ENCODE measurements at regions of chr12 and their contacts with region 1.

Region 1: GRCh38 chr12:53974084-53975063 is at the start of gene HOTAIR:
- DNase-seq: peak; percentile 72
- H3K4me3 Mint-ChIP-seq: peak within 1 kb of the TSS; percentile 36
- H3K27ac Mint-ChIP-seq: peak within 1 kb of the TSS; percentile 80
- H3K4me1 Mint-ChIP-seq: peaks cover 9% of the 10 kb centered on the region
- H3K27me3 Mint-ChIP-seq: peaks cover 89% of the 10 kb centered on the region
- total RNA-seq, gene HOTAIR: not detected in 2 replicates

Region 2: GRCh38 chr12:53828598-53828997 is 145.8 kb before region 1 on chr12:
- intact Hi-C with region 1: no loop called
- DNase-seq: no peak
- H3K4me3 Mint-ChIP-seq: no peak overlapping the region
- H3K27ac Mint-ChIP-seq: no peak overlapping the region
- H3K4me1 Mint-ChIP-seq: no peaks in the 10 kb centered on the region
- H3K27me3 Mint-ChIP-seq: peaks cover 27% of the 10 kb centered on the region

Region 3: GRCh38 chr12:53928054-53928835 is 46.1 kb before region 1 on chr12:
- intact Hi-C with region 1: no loop called
- DNase-seq: no peak
- H3K4me3 Mint-ChIP-seq: no peak overlapping the region
- H3K27ac Mint-ChIP-seq: no peak overlapping the region
- H3K4me1 Mint-ChIP-seq: no peaks in the 10 kb centered on the region
- H3K27me3 Mint-ChIP-seq: peaks cover 90% of the 10 kb centered on the region

Region 4: DNA sequence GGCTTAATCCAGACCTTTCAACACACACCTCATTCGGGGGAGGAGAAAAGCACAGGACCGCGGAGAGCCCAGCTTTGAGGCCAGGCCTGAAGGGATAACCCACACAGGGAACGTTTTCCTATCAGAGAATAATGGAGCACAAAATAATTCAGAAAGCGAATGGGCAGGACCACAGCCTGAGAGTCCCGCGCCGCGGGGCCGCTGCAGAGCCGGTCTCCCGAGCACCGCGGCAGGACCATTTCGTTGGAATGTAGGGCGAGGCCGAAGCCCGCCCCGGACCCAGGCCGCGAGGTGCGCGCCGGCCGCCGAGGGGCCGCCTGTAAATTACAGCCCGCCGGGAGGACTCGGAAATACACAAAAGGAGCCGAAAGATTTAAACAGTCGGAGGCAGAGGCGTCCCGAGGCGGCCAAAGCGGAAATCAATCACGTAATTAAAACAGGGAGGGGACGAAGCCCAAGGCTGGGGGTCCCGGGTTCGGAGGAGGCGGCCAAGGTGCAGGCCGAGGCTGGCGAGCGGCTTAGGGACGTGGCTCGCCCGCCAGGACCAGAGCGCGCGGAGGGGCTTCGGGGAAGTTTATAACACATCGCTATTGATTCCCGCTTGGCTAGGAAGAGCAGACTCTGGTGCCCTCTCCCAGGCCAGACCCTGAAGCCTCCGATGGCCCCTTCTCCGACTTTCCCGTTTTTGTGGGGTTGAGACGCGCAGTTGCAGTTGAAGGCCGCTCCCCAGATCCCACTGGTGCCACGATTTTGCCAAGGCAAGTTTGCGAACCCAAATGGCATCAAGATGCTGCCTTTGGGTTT is 73.0 kb after region 1 on chr12:
- intact Hi-C with region 1: loop called (anchors 2 kb)
- DNase-seq: no peak
- H3K4me3 Mint-ChIP-seq: no peak overlapping the region
- H3K27ac Mint-ChIP-seq: no peak overlapping the region
- H3K4me1 Mint-ChIP-seq: peaks cover 15% of the 10 kb centered on the region
- H3K27me3 Mint-ChIP-seq: peaks cover 98% of the 10 kb centered on the region

Measured in activated CD4-positive, alpha-beta T cell treated with anti-CD3 and anti-CD28 coated beads, Interleukin-2, amount 10 ng/mL, durations not matched to agents 24 days and 14 days (primary cell).